Naive thymus-derived CD4-positive, alpha-beta T cell (primary cell): ENCODE measurements at regions of chr6 and their contacts with region 1.

Region 1: GRCh38 chr6:138109042-138109997 is 2.1 kb upstream of the PERP start:
- DNase-seq: peak; percentile 47 to 77 (median 68)
- ATAC-seq: peak; percentile 84
- H3K4me3 ChIP-seq: no peak overlapping the region
- H3K4me3 Mint-ChIP-seq: peak overlapping the region in 4 of 10 donors; percentile 2 to 45 (median 7)
- H3K27ac ChIP-seq: no peak overlapping the region
- H3K27ac Mint-ChIP-seq: no peak overlapping the region
- H3K4me1 ChIP-seq: peaks cover 8 to 10% of the 10 kb centered on the region in 2 donors
- H3K4me1 Mint-ChIP-seq: peaks cover 14 to 27% (median 20%) of the 10 kb centered on the region in 7 donors
- H3K27me3 ChIP-seq: peaks cover 0 to 6% of the 10 kb centered on the region in 2 donors
- H3K27me3 Mint-ChIP-seq: peaks cover 34 to 56% (median 47%) of the 10 kb centered on the region in 5 donors

Region 2: DNA sequence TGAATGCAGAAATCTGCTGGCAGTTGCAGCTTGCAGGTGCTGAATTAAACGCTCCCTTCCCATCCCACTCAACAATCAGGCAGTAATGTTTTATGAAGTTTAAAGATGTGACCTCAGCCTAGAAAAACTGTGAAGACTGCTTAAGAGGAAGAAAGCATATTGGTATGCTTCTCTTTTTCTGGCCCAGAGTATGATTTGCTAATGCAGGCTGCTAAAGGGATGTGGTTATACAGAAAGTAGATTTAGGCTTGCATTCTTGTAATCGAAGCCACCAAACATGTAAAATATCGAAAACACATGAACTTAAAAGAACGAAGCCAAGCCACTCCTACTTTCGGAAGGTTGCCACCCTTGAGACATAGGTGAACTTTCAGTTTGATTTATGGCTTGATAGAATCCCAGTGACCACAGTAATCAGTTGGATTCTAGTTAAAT is 1357.8 kb before region 1 on chr6:
- CTCF ChIA-PET with region 1: no interaction called
- POLR2A ChIA-PET with region 1: no interaction called
- intact Hi-C with region 1: loop called in 1 of 2 experiments (anchors 5 kb)
- DNase-seq: peak in 7 of 9 donors; percentile 28 to 78 (median 68)
- ATAC-seq: peak; percentile 71
- H3K4me3 ChIP-seq: peak overlapping the region; percentile 37
- H3K4me3 Mint-ChIP-seq: peak overlapping the region; percentile 22 to 87 (median 72)
- H3K27ac ChIP-seq: peak overlapping the region; percentile 60
- H3K27ac Mint-ChIP-seq: peak overlapping the region; percentile 78 to 98 (median 91)
- H3K4me1 ChIP-seq: peaks cover 37 to 51% of the 10 kb centered on the region in 2 donors
- H3K4me1 Mint-ChIP-seq: peaks cover 58 to 84% (median 65%) of the 10 kb centered on the region in 7 donors
- H3K27me3 ChIP-seq: no peaks in the 10 kb centered on the region
- H3K27me3 Mint-ChIP-seq: no peaks in the 10 kb centered on the region

Region 3: GRCh38 chr6:137661601-137662000 is 447.7 kb before region 1 on chr6:
- CTCF ChIA-PET with region 1: no interaction called
- POLR2A ChIA-PET with region 1: no interaction called
- intact Hi-C with region 1: loop called (anchors 1 to 5 kb)
- DNase-seq: peak in 5 of 9 donors; percentile 11 to 45 (median 28)
- ATAC-seq: no peak
- H3K4me3 ChIP-seq: no peak overlapping the region
- H3K4me3 Mint-ChIP-seq: no peak overlapping the region
- H3K27ac ChIP-seq: no peak overlapping the region
- H3K27ac Mint-ChIP-seq: no peak overlapping the region
- H3K4me1 ChIP-seq: peaks cover 0 to 4% of the 10 kb centered on the region in 2 donors
- H3K4me1 Mint-ChIP-seq: peaks cover 0 to 43% (median 0%) of the 10 kb centered on the region in 7 donors
- H3K27me3 ChIP-seq: no peaks in the 10 kb centered on the region
- H3K27me3 Mint-ChIP-seq: peaks cover 0 to 11% (median 0%) of the 10 kb centered on the region in 5 donors

Region 4: GRCh38 chr6:137903933-137904821 is 205.1 kb before region 1 on chr6:
- CTCF ChIA-PET with region 1: no interaction called
- POLR2A ChIA-PET with region 1: no interaction called
- intact Hi-C with region 1: loop called in 1 of 2 experiments (anchors 5 kb)
- DNase-seq: peak in 1 of 9 donors; percentile 49
- ATAC-seq: peak; percentile 72
- H3K4me3 ChIP-seq: no peak overlapping the region
- H3K4me3 Mint-ChIP-seq: peak overlapping the region in 7 of 10 donors; percentile 2 to 79 (median 64)
- H3K27ac ChIP-seq: no peak overlapping the region
- H3K27ac Mint-ChIP-seq: peak overlapping the region in 2 of 9 donors; percentile 10 to 91
- H3K4me1 ChIP-seq: peaks cover 4 to 6% of the 10 kb centered on the region in 2 donors
- H3K4me1 Mint-ChIP-seq: peaks cover 4 to 51% (median 22%) of the 10 kb centered on the region in 7 donors
- H3K27me3 ChIP-seq: no peaks in the 10 kb centered on the region
- H3K27me3 Mint-ChIP-seq: peaks cover 0 to 3% (median 0%) of the 10 kb centered on the region in 5 donors

Region 5: GRCh38 chr6:138001750-138002349 is 107.5 kb before region 1 on chr6:
- CTCF ChIA-PET with region 1: interaction called, 58 read pairs
- POLR2A ChIA-PET with region 1: interaction called, 5 read pairs
- intact Hi-C with region 1: loop called (anchors 1 kb)
- DNase-seq: peak in 8 of 9 donors; percentile 37 to 65 (median 56)
- ATAC-seq: peak; percentile 79
- H3K4me3 ChIP-seq: no peak overlapping the region
- H3K4me3 Mint-ChIP-seq: no peak overlapping the region
- H3K27ac ChIP-seq: no peak overlapping the region
- H3K27ac Mint-ChIP-seq: peak overlapping the region in 1 of 9 donors; percentile 27
- H3K4me1 ChIP-seq: no peaks in the 10 kb centered on the region
- H3K4me1 Mint-ChIP-seq: peaks cover 0 to 16% (median 5%) of the 10 kb centered on the region in 7 donors
- H3K27me3 ChIP-seq: no peaks in the 10 kb centered on the region
- H3K27me3 Mint-ChIP-seq: peaks cover 0 to 11% (median 0%) of the 10 kb centered on the region in 5 donors

Region 6: DNA sequence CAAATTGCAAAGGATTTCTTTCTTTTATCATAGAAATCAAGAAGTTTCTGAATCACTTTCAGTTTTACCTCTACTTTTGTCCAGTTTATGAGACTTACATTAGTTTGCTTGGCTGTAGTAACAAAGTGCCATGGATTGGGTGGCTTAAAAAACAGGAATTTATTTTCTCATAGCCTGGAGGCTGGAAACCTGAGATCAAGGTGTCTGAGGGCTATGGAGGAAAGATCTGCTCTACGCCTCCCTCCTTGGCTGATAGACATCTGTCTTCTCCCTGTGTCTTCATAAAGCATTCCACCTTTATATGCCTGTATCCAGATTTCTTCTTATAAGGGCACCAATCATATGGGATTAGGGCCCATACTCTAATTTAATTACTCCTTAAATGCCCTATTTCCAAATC is 88.1 kb before region 1 on chr6:
- CTCF ChIA-PET with region 1: no interaction called
- POLR2A ChIA-PET with region 1: no interaction called
- intact Hi-C with region 1: no loop called
- DNase-seq: no peak
- ATAC-seq: no peak
- H3K4me3 ChIP-seq: no peak overlapping the region
- H3K4me3 Mint-ChIP-seq: no peak overlapping the region
- H3K27ac ChIP-seq: no peak overlapping the region
- H3K27ac Mint-ChIP-seq: no peak overlapping the region
- H3K4me1 ChIP-seq: no peaks in the 10 kb centered on the region
- H3K4me1 Mint-ChIP-seq: no peaks in the 10 kb centered on the region
- H3K27me3 ChIP-seq: no peaks in the 10 kb centered on the region
- H3K27me3 Mint-ChIP-seq: peaks cover 4 to 25% (median 11%) of the 10 kb centered on the region in 5 donors

Region 7: GRCh38 chr6:138161338-138162110 is 52.2 kb after region 1 on chr6 and contains the start of gene ARFGEF3:
- CTCF ChIA-PET with region 1: no interaction called
- POLR2A ChIA-PET with region 1: no interaction called
- intact Hi-C with region 1: loop called in 1 of 2 experiments (anchors 5 kb)
- DNase-seq: peak in 5 of 9 donors; percentile 4 to 72 (median 25)
- ATAC-seq: peak; percentile 87
- H3K4me3 ChIP-seq: peak within 1 kb of the TSS; percentile 39
- H3K4me3 Mint-ChIP-seq: peak within 1 kb of the TSS; percentile 62 to 78 (median 74)
- H3K27ac ChIP-seq: no peak within 1 kb of the TSS
- H3K27ac Mint-ChIP-seq: peak within 1 kb of the TSS in 1 of 9 donors; percentile 3
- H3K4me1 ChIP-seq: peaks cover 0 to 3% of the 10 kb centered on the region in 2 donors
- H3K4me1 Mint-ChIP-seq: peaks cover 2 to 16% (median 8%) of the 10 kb centered on the region in 7 donors
- H3K27me3 ChIP-seq: peaks cover 7 to 16% of the 10 kb centered on the region in 2 donors
- H3K27me3 Mint-ChIP-seq: peaks cover 59 to 68% (median 65%) of the 10 kb centered on the region in 5 donors
- total RNA-seq, gene ARFGEF3: 0.02 to 0.15 (median 0.03) TPM in 3 of 5 experiments, not detected in the others

Region 8: DNA sequence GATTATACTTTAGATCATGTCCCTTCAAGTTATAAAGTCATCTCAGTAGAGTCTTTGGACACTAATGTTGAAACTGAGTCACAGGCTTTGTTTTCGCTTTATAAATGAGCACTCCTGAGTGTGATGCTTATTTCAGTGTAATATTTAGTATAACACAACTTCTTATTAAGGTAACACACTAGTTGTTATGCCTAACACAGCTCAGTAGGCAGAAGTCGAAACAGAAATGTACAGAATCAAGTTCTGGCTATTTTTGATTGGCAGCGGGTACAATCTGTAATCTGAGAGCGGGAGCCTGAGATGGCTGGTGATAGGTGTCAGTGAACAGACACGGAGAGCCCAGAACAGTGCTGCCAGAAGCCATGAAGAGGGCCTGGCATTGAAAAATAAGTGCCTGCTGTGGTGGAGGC is 1037.0 kb after region 1 on chr6:
- CTCF ChIA-PET with region 1: no interaction called
- POLR2A ChIA-PET with region 1: no interaction called
- intact Hi-C with region 1: no loop called
- DNase-seq: no peak
- ATAC-seq: peak; percentile 31
- H3K4me3 ChIP-seq: peak overlapping the region; percentile 43
- H3K4me3 Mint-ChIP-seq: peak overlapping the region; percentile 68 to 85 (median 80)
- H3K27ac ChIP-seq: peak overlapping the region; percentile 4
- H3K27ac Mint-ChIP-seq: peak overlapping the region; percentile 37 to 91 (median 73)
- H3K4me1 ChIP-seq: peaks cover 80 to 89% of the 10 kb centered on the region in 2 donors
- H3K4me1 Mint-ChIP-seq: peaks cover 88 to 97% (median 94%) of the 10 kb centered on the region in 7 donors
- H3K27me3 ChIP-seq: no peaks in the 10 kb centered on the region
- H3K27me3 Mint-ChIP-seq: no peaks in the 10 kb centered on the region